ENCODE measurements at regions of chr10 and their contacts with region 1.

Region 1: DNA sequence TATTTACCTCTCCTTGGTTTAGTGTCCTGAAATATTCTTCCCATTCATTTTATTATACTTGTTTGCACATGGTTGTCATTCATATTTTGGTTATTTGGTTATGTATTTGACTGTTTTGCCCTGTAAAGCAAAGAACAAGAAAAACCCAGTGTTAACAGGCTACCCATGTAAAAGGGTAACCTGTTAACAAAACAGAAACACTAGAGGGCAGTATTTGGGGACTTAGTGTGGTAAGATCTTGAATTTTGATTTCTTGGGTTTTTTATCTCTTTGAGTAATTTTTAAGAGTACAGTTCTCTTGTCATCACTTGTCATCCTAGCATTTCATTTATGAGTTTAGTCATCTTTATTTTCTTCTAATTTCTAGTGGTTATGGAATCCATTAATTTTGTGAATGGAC is 51.3 kb downstream of the POLL start:
- DNase-seq: no peak
- ATAC-seq: no peak
- H3K4me3 ChIP-seq: no peak overlapping the region
- H3K27ac ChIP-seq: no peak overlapping the region
- H3K4me1 ChIP-seq: no peaks in the 10 kb centered on the region
- H3K27me3 ChIP-seq: no peaks in the 10 kb centered on the region
- CTCF ChIP-seq: peak in 7 of 9 donors; percentile 43 to 66 (median 48)

Region 2: GRCh38 chr10:100838986-100839385 is 697.8 kb before region 1 on chr10:
- intact Hi-C with region 1: loop called in 1 of 10 experiments (anchors 5 kb)
- DNase-seq: no peak
- ATAC-seq: no peak
- H3K4me3 ChIP-seq: no peak overlapping the region
- H3K27ac ChIP-seq: no peak overlapping the region
- H3K4me1 ChIP-seq: no peaks in the 10 kb centered on the region
- H3K27me3 ChIP-seq: peaks cover 0 to 81% (median 76%) of the 10 kb centered on the region in 7 donors
- CTCF ChIP-seq: no peak

Region 3: GRCh38 chr10:101301249-101301711 is 235.5 kb before region 1 on chr10:
- intact Hi-C with region 1: no loop called
- DNase-seq: peak in 1 of 2 donors; percentile 33
- ATAC-seq: peak in 7 of 8 donors; percentile 47 to 91 (median 83)
- H3K4me3 ChIP-seq: no peak overlapping the region
- H3K27ac ChIP-seq: no peak overlapping the region
- H3K4me1 ChIP-seq: peaks cover 0 to 10% (median 0%) of the 10 kb centered on the region in 9 donors
- H3K27me3 ChIP-seq: peaks cover 0 to 43% (median 18%) of the 10 kb centered on the region in 7 donors
- CTCF ChIP-seq: peak; percentile 11 to 59 (median 52)

Region 4: DNA sequence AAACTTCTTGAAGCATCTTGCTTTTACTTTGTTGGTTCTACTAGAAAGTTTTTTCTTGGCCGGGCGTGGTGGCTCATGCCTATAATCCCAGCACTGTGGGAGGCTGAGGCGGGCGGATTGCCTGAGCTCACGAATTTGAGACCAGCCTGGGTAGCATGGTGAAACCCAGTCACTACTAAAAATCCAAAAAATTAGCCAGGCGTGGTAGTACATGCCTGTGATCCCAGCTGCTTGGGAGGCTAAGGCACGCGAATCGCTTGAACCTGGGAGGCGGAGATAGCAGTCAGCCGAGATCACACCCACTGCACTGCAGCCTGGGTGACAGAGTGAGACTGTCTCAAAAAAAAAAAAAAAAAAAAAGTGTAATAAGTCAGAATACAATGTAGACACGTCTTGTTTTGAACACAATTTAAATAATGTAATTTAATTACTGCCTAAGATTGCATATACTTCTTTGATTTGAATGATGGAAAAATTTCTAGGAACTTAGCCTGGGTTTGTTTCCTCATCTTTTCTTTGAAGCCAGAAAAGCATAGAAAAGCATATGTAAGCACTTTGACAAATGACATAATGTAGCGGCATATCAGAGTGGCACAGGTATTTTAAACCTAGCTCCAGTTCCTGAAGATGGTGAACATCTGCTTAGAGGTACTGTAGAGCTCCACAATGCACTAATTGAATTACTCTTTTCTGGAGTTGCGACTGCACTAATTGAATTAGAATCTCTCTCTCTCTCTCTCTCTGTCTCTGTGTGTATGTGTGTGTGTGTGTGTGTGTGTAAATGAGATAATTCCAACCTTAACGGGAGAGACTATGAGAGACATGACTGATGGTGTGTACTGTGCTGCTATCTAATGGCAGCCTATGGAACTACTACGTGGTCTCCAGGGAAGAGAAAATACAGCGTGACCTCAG is 95.0 kb before region 1 on chr10:
- intact Hi-C with region 1: no loop called
- DNase-seq: peak in 1 of 2 donors; percentile 17
- ATAC-seq: peak; percentile 82 to 93 (median 84)
- H3K4me3 ChIP-seq: no peak overlapping the region
- H3K27ac ChIP-seq: no peak overlapping the region
- H3K4me1 ChIP-seq: peaks cover 0 to 34% (median 16%) of the 10 kb centered on the region in 9 donors
- H3K27me3 ChIP-seq: no peaks in the 10 kb centered on the region
- CTCF ChIP-seq: peak in 8 of 9 donors; percentile 29 to 68 (median 62)